Panc1 (cell line): ENCODE measurements at regions of chr1 and their contacts with region 1.

Region 1: GRCh38 chr1:87335175-87335884 is 6.7 kb downstream of the LMO4 start:
- DNase-seq: no peak
- ATAC-seq: peak; percentile 77
- H3K4me3 ChIP-seq: peak overlapping the region; percentile 42 to 71
- H3K27ac ChIP-seq: peak overlapping the region; percentile 83
- H3K4me1 ChIP-seq: peaks cover 53% of the 10 kb centered on the region
- H3K27me3 ChIP-seq: no peaks in the 10 kb centered on the region
- CTCF ChIP-seq: peak; percentile 63

Region 2: GRCh38 chr1:87093286-87093685 is 242.0 kb before region 1 on chr1:
- CTCF ChIA-PET with region 1: no interaction called
- POLR2A ChIA-PET with region 1: no interaction called
- in situ Hi-C with region 1: no loop called
- intact Hi-C with region 1: no loop called
- DNase-seq: no peak
- ATAC-seq: peak; percentile 86
- H3K4me3 ChIP-seq: no peak overlapping the region
- H3K27ac ChIP-seq: no peak overlapping the region
- H3K4me1 ChIP-seq: peaks cover 7% of the 10 kb centered on the region
- H3K27me3 ChIP-seq: no peaks in the 10 kb centered on the region
- CTCF ChIP-seq: no peak

Region 3: GRCh38 chr1:87362834-87363426 is 27.6 kb after region 1 on chr1:
- CTCF ChIA-PET with region 1: interaction called, 10 read pairs
- POLR2A ChIA-PET with region 1: interaction called, 3 read pairs
- in situ Hi-C with region 1: no loop called
- intact Hi-C with region 1: no loop called
- DNase-seq: no peak
- ATAC-seq: no peak
- H3K4me3 ChIP-seq: no peak overlapping the region
- H3K27ac ChIP-seq: no peak overlapping the region
- H3K4me1 ChIP-seq: no peaks in the 10 kb centered on the region
- H3K27me3 ChIP-seq: no peaks in the 10 kb centered on the region
- CTCF ChIP-seq: no peak

Region 4: DNA sequence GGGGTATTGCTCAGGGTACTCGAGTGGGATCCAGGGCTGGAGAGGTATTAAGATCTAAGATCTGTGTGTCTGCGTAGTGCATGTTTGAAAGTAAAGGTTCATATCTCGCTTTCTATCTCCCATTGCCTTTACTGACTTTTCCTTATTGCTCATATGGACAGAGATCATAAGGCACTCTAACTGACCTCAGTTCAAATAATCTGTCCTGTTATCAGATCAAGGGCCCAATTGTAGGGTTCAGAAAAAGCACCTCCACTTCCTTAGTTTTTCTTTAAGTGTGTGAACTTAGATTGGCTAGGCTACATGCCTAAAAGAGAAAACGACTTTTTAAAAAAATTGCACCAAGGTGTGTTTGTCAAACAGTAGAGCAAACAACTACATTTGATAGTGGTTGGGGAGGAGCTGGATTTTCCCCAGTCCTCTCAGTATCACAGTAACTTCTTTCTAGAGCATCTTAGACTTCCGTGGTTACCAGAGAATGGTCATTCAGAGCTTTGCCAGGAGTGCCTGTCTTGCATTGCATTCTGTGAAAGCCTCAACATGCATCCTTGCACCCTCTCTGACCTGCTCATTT is 51.0 kb after region 1 on chr1:
- CTCF ChIA-PET with region 1: no interaction called
- POLR2A ChIA-PET with region 1: interaction called, 13 read pairs
- in situ Hi-C with region 1: no loop called
- intact Hi-C with region 1: no loop called
- DNase-seq: no peak
- ATAC-seq: no peak; the same call in 1 of the 2 replicates
- H3K4me3 ChIP-seq: no peak overlapping the region
- H3K27ac ChIP-seq: no peak overlapping the region
- H3K4me1 ChIP-seq: no peaks in the 10 kb centered on the region
- H3K27me3 ChIP-seq: no peaks in the 10 kb centered on the region
- CTCF ChIP-seq: no peak